ENCODE measurements at regions of chr20 and their contacts with region 1.

Region 1: GRCh38 chr20:16434062-16434664 is 139.1 kb downstream of the KIF16B start:
- DNase-seq: peak; percentile 75
- ATAC-seq: peak; percentile 98
- H3K4me3 ChIP-seq: no peak overlapping the region
- H3K27ac ChIP-seq: no peak overlapping the region
- H3K4me1 ChIP-seq: no peaks in the 10 kb centered on the region
- H3K27me3 ChIP-seq: no peaks in the 10 kb centered on the region
- CTCF ChIP-seq: peak; percentile 81
- EP300 ChIP-seq: no peak
- POLR2A ChIP-seq: no peak
- RAD21 ChIP-seq: peak; percentile 50

Region 2: DNA sequence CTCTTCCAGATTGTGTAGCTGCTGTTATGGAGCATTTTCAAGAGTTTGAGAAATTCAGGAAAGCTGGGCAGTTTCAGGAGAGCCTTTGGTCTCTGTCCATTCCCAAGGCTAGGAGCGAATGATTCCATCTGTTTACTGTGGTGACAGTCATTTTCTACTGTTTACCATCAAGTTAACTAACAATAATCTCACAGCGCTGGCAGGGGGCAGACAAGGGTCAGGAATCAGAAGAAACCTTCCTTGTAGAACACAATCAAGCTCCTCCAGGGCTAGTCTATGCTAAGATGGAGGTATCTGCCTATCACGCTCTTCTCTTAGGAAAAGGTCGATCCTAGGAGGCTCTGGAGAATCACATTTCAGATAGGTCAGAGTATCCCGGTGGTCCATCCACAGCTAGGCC is 154.8 kb before region 1 on chr20:
- CTCF ChIA-PET with region 1: no interaction called
- POLR2A ChIA-PET with region 1: no interaction called
- in situ Hi-C with region 1: no loop called
- intact Hi-C with region 1: loop called (anchors 10 kb)
- DNase-seq: peak; percentile 43
- ATAC-seq: peak; percentile 88
- H3K4me3 ChIP-seq: no peak overlapping the region
- H3K27ac ChIP-seq: no peak overlapping the region
- H3K4me1 ChIP-seq: peaks cover 21% of the 10 kb centered on the region
- H3K27me3 ChIP-seq: no peaks in the 10 kb centered on the region
- CTCF ChIP-seq: peak; percentile 57
- EP300 ChIP-seq: no peak
- POLR2A ChIP-seq: no peak
- RAD21 ChIP-seq: no peak

Region 3: DNA sequence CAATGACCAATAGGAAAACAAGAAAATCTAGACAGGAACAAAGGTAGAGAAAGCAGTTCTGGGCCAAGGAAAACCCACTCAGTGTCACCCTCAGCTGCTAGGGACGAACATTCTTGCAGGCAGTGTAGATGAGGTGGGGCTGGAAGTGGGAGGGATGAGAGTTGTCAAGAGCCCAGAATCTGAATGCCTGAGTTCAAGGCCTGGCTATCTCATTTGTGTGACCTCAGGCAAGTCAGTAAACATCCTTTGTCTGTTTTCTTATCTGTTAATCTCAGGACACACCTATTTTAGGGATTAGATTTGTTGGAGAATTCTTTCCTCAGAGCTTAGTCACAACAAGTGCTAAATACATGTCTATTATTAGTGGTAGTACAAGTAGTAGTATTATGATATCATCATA is 189.9 kb after region 1 on chr20:
- CTCF ChIA-PET with region 1: no interaction called
- POLR2A ChIA-PET with region 1: no interaction called
- in situ Hi-C with region 1: no loop called
- intact Hi-C with region 1: no loop called
- DNase-seq: peak; percentile 46
- ATAC-seq: peak; percentile 55; the same call in 2 of the 3 replicates
- H3K4me3 ChIP-seq: no peak overlapping the region
- H3K27ac ChIP-seq: no peak overlapping the region
- H3K4me1 ChIP-seq: no peaks in the 10 kb centered on the region
- H3K27me3 ChIP-seq: no peaks in the 10 kb centered on the region; a peak in 2 of 5 replicates
- CTCF ChIP-seq: no peak
- EP300 ChIP-seq: no peak
- POLR2A ChIP-seq: no peak
- RAD21 ChIP-seq: no peak